IMR-90 (cell line): ENCODE measurements at regions of chr2 and their contacts with region 1.

Region 1: DNA sequence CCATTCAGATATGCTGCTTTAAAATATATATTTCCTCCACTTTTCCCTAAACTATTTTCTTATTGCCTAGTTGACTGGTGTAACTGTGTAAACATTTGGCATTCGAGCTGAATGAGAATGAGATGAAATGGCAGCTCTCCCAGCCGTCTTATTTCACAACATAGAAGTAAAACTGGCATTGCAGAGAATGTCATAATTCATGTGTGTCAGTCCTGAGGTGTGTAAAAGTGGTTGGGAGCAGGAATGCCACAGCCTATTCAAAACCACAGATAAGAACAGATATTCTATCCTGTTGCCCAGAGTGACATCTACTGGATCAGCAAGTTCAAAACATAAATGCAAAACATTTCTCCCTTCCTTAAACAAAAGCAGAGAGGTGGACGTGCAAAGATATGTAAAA is 565.5 kb upstream of the CHAC2 start:
- DNase-seq: peak; percentile 84
- ATAC-seq: peak; percentile 95
- H3K4me3 ChIP-seq: no peak overlapping the region
- H3K27ac ChIP-seq: no peak overlapping the region
- H3K4me1 ChIP-seq: no peaks in the 10 kb centered on the region
- H3K27me3 ChIP-seq: no peaks in the 10 kb centered on the region
- CTCF ChIP-seq: peak; percentile 62
- POLR2A ChIP-seq: no peak
- RAD21 ChIP-seq: peak; percentile 76

Region 2: GRCh38 chr2:52144585-52144984 is 1057.5 kb before region 1 on chr2:
- CTCF ChIA-PET with region 1: no interaction called
- POLR2A ChIA-PET with region 1: no interaction called
- dilution Hi-C with region 1: no loop called
- in situ Hi-C with region 1: no loop called
- intact Hi-C with region 1: loop called (anchors 5 kb)
- DNase-seq: peak; percentile 1
- ATAC-seq: peak; percentile 49
- H3K4me3 ChIP-seq: no peak overlapping the region
- H3K27ac ChIP-seq: no peak overlapping the region
- H3K4me1 ChIP-seq: no peaks in the 10 kb centered on the region
- H3K27me3 ChIP-seq: no peaks in the 10 kb centered on the region
- CTCF ChIP-seq: no peak
- POLR2A ChIP-seq: no peak
- RAD21 ChIP-seq: peak; percentile 23; the same call in 1 of the 2 replicates

Region 3: DNA sequence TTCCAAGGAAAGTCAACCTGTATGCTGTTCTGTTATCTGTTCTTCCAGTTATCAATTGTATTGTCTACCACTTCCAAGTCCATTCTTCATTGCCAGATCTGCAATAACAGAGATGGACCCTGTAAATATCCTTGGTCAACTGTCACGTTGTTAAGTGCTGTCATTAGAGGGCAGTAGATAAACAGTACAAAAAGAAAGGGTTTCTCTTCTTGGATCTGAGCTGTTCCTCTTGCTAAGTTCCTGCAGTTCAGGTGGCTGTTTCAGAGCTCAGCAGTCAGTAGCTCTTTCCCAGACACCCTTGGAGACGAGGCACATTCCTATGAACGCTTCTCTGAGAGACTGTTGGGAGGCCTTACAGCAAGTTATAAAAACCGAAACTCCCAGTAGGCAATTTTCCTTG is 391.6 kb before region 1 on chr2:
- CTCF ChIA-PET with region 1: no interaction called
- POLR2A ChIA-PET with region 1: no interaction called
- dilution Hi-C with region 1: no loop called
- in situ Hi-C with region 1: no loop called
- intact Hi-C with region 1: loop called (anchors 1 kb)
- DNase-seq: peak; percentile 49
- ATAC-seq: peak; percentile 74
- H3K4me3 ChIP-seq: no peak overlapping the region
- H3K27ac ChIP-seq: no peak overlapping the region
- H3K4me1 ChIP-seq: no peaks in the 10 kb centered on the region
- H3K27me3 ChIP-seq: no peaks in the 10 kb centered on the region
- CTCF ChIP-seq: peak; percentile 52
- POLR2A ChIP-seq: no peak
- RAD21 ChIP-seq: peak; percentile 55

Region 4: DNA sequence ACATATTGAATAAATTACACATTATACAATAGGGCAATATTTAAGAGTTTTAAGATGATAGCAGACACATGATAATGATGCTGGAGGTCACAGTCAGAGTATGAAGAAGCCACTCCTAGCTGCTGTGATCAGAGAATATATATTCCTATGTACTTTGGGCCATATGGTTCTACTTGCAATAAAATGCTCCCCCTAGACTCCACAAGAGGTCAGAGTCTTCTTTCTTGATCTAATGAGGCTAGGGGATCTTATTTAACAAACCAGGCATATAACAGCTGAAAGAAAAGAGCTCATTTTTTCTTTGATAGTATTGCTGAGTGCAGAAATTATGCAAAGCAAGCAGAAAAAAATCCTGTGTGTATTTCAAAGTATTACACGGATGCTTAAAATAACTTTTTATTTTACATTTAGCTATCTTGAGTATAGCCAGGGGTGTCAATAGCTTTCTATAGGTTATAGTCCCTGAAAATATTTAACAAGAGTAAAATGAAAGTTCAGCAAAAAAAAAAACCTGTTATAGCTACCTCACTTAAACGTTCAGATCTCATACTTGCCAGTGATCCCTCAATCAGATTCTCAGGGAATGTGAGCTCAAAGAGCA is 183.1 kb before region 1 on chr2:
- CTCF ChIA-PET with region 1: interaction called, 3 read pairs
- POLR2A ChIA-PET with region 1: no interaction called
- dilution Hi-C with region 1: no loop called
- in situ Hi-C with region 1: no loop called
- intact Hi-C with region 1: loop called (anchors 5 kb)
- DNase-seq: peak; percentile 34
- ATAC-seq: peak; percentile 62
- H3K4me3 ChIP-seq: no peak overlapping the region
- H3K27ac ChIP-seq: no peak overlapping the region
- H3K4me1 ChIP-seq: no peaks in the 10 kb centered on the region; the same call in 1 of the 2 replicates
- H3K27me3 ChIP-seq: no peaks in the 10 kb centered on the region
- CTCF ChIP-seq: peak; percentile 30; the same call in 1 of the 2 replicates
- POLR2A ChIP-seq: no peak
- RAD21 ChIP-seq: peak; percentile 19; the same call in 1 of the 2 replicates

Region 5: DNA sequence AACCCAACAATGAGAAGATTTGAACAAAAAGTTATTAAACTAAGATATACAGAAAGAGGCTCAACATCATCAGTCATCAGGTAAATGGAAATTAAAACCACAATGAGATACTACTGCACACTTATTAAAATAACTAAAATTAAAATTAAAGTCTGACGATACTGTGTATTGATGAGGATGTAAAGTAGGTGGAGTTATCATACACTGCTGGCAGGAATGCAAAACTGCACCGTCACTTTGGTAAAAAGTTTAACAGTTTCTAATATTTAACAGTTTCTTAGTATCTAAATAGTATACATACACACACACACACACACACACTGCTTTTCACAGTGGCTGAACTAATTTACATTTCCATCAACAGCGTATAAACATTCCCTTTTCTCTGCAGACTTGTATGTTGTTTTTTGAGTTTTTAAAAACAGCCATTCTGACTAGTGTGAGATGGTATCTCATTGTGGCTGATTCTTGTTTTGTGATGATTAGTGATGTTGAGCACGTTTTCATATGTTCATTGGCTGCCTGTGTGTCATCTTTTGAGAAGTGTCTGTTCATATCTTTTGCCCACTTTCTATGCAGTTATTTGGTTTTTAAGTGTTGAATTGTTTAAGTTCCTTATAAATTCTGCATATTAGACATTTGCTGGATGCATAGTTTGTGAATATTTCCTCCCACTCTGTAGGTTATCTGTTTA is 161.4 kb before region 1 on chr2:
- CTCF ChIA-PET with region 1: no interaction called
- POLR2A ChIA-PET with region 1: no interaction called
- dilution Hi-C with region 1: no loop called
- in situ Hi-C with region 1: no loop called
- intact Hi-C with region 1: loop called (anchors 5 kb)
- DNase-seq: peak; percentile 31
- ATAC-seq: peak; percentile 79
- H3K4me3 ChIP-seq: no peak overlapping the region
- H3K27ac ChIP-seq: no peak overlapping the region
- H3K4me1 ChIP-seq: 0 out of 2 replicates have a peak, but pooled peaks cover 2% of the 10 kb centered on the region
- H3K27me3 ChIP-seq: no peaks in the 10 kb centered on the region
- CTCF ChIP-seq: peak; percentile 13; the same call in 1 of the 2 replicates
- POLR2A ChIP-seq: no peak
- RAD21 ChIP-seq: no peak